ENCODE measurements at regions of chr5 and their contacts with region 1.

Region 1: DNA sequence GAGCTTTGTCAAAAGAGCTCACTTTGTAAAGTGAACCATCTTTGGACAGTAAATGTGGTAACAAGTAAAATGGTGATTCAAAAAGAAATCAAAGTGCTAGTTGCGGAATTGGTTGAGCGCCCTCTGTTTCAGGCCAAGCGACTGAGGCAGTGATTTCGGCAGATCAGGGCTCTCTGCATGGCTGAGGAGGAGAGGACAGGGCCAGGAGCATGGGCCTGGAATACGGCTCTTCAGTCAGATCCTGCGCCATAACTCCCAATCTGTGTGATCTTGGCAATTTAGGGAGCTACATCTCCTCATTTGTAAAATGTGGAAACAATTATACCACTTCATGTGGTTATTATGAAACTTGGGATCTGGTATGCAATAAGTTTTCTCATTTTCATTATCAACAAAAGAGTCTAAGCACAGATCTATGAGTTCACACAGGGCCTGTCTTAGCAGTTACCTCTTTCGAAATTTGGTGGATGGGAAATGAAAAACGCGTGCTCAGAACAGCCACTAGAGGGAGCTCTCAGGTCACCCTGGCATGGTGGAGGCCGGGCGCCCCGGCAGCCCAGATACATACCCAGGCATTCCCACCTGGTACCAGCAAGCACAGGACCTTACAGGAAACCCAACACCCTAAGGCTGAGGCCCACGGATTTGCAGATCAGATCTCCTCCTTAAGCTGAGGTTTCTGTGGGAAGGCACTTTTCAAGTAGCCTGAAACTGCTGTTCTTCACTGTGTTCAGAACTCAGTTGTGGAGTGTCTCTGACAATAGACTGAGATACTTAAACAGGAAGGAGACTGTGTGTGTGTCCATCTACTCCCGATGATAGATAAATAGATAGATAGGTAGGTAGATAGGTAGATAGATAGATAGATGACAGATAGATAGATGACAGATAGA is 303.7 kb downstream of the RAB3C start:
- DNase-seq: peak; percentile 25
- ATAC-seq: peak; percentile 92
- H3K4me3 ChIP-seq: no peak overlapping the region
- H3K27ac ChIP-seq: no peak overlapping the region
- H3K4me1 ChIP-seq: no peaks in the 10 kb centered on the region; the same call in 1 of the 2 replicates
- H3K27me3 ChIP-seq: peaks cover 2 to 26% of the 10 kb centered on the region in 2 experiments; a peak in 4 of 5 replicates
- CTCF ChIP-seq: peak; percentile 88
- EP300 ChIP-seq: no peak
- POLR2A ChIP-seq: no peak
- RAD21 ChIP-seq: peak; percentile 66

Region 2: GRCh38 chr5:59007460-59008063 is 121.0 kb after region 1 on chr5:
- CTCF ChIA-PET with region 1: no interaction called
- POLR2A ChIA-PET with region 1: no interaction called
- in situ Hi-C with region 1: loop called (anchors 10 kb)
- intact Hi-C with region 1: loop called (anchors 1 kb)
- DNase-seq: no peak
- ATAC-seq: no peak
- H3K4me3 ChIP-seq: no peak overlapping the region
- H3K27ac ChIP-seq: no peak overlapping the region
- H3K4me1 ChIP-seq: no peaks in the 10 kb centered on the region
- H3K27me3 ChIP-seq: no peaks in the 10 kb centered on the region
- CTCF ChIP-seq: 0 out of 2 replicates have a peak, but pooled peaks have one; percentile 5
- EP300 ChIP-seq: no peak
- POLR2A ChIP-seq: no peak
- RAD21 ChIP-seq: no peak

Region 3: DNA sequence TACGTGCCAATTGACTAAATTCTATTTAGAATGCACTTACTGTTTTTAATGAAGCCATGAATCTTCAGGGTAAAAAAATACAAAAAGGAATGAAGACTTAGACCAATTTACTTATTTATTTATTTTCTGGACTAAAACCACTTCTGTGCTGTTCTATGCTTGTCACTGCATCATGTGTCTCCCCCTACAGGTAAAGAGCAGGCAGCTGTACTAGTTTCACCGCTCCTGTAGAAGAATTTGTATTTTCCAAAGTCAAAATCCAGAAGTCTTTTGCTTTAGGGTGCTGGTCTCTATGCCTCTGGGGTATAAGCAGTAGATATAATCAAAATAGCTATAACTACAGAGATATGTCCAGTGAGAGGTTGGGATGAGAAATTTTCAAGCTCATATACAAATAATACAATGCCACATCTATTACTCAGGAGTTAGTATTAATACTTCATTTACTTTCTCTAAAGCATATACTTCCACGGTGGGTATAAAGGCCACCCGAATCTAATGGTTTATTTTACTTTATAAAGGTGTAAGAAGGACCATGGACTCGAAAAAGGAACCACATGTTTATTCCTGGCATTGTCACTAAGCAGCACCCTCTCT is 287.8 kb after region 1 on chr5:
- CTCF ChIA-PET with region 1: interaction called, 18 read pairs
- POLR2A ChIA-PET with region 1: no interaction called
- in situ Hi-C with region 1: loop called (anchors 5 kb)
- intact Hi-C with region 1: loop called (anchors 1 kb)
- DNase-seq: peak; percentile 63
- ATAC-seq: peak; percentile 88
- H3K4me3 ChIP-seq: no peak overlapping the region
- H3K27ac ChIP-seq: no peak overlapping the region
- H3K4me1 ChIP-seq: no peaks in the 10 kb centered on the region
- H3K27me3 ChIP-seq: no peaks in the 10 kb centered on the region
- CTCF ChIP-seq: peak; percentile 77
- EP300 ChIP-seq: no peak
- POLR2A ChIP-seq: no peak
- RAD21 ChIP-seq: peak; percentile 85

Region 4: DNA sequence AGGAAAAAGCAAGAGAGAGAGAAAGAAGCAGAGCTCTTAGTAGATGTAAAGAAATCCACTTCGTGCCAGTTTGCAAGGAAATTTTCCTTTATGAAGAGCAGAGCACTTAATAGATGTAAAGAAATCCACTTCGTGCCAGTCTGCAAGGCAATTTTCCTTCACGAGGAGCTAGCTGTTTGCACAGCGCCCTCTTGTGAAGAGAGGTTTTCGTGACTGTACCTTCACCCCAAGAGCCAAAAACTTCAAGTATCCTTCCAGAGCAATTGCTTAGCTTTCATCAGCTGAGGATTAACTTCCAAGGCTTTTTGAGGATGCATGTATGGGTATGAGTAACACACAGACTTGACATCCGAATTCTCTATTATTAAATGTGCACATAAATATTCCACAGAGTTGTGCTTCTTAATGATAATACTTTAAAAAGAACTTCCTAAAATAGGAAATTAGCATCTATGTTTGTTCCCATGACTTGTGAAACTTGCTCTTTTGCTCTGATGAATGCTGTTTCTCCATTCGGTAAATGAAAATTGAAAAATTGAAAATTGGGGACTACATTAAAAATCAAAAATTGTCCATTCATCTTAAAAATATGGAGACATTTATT is 481.3 kb after region 1 on chr5:
- CTCF ChIA-PET with region 1: no interaction called
- POLR2A ChIA-PET with region 1: no interaction called
- in situ Hi-C with region 1: loop called (anchors 25 kb)
- intact Hi-C with region 1: no loop called
- DNase-seq: peak; percentile 30
- ATAC-seq: peak; percentile 63
- H3K4me3 ChIP-seq: no peak overlapping the region
- H3K27ac ChIP-seq: no peak overlapping the region
- H3K4me1 ChIP-seq: no peaks in the 10 kb centered on the region
- H3K27me3 ChIP-seq: no peaks in the 10 kb centered on the region
- CTCF ChIP-seq: peak; percentile 79
- EP300 ChIP-seq: no peak
- POLR2A ChIP-seq: no peak
- RAD21 ChIP-seq: no peak